ENCODE measurements at regions of chr19 and their contacts with region 1.

Region 1: DNA sequence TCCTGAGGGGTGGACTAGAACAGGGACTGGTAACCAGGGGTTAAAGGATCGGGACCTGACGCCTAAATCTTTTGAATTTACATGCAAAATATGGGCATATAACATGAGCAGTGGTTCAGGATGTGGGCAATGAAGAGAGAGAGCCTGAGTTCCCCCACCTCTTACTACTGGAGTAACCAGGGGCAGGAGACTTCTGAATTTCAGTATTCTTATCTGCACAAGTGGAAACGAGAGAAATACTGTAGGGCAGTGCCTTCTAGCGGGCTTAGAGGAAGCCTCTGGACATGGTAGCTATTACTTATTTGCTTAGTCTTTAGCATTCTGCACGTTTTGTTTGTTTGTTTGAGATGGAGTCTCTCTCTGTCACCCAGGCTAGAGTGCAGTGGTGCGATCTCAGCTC is 26.3 kb downstream of the BCAT2 start:
- DNase-seq: no peak
- H3K4me3 ChIP-seq: no peak overlapping the region
- H3K4me3 Mint-ChIP-seq: peak overlapping the region in 1 of 8 donors; percentile 17
- H3K27ac ChIP-seq: no peak overlapping the region
- H3K27ac Mint-ChIP-seq: no peak overlapping the region
- H3K4me1 ChIP-seq: no peaks in the 10 kb centered on the region
- H3K4me1 Mint-ChIP-seq: peaks cover 0 to 5% (median 4%) of the 10 kb centered on the region in 4 donors
- H3K27me3 ChIP-seq: no peaks in the 10 kb centered on the region
- H3K27me3 Mint-ChIP-seq: peaks cover 10 to 14% of the 10 kb centered on the region in 2 donors

Region 2: DNA sequence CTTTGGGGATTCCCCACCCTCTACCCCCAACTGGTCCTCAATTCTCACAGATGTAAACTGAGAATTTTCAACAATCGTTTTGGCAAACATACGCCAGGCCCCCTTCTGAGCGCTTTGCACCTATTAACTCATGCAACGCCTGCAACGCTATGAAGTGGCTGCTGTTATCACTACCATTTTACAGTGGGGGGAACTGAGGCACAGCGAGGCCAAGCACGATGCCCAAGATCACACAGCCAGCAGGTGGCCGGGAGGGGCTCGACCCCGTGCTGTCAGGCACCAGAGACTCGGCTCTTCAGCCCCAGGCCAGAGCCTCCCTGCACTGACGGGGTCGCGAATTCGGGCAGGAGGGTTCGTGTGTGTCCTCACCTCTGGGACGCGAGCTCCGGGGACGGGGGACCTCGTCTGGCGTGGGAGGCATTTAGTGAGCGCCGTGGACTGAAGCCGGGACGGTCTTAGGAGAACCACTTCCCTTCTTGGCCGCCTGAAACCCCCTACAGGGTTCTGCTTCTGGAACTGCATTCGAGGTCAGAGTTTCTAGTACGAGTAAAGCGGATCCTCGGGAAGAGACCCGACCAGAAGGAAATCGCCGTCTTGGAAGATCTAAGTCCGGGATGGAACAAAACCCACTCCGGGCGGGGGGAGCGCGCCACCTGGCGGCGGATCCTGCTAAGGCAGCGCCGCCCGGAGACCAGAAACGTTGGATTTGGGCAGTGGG is 493.6 kb before region 1 on chr19:
- CTCF ChIA-PET with region 1: no interaction called
- POLR2A ChIA-PET with region 1: no interaction called
- intact Hi-C with region 1: no loop called
- DNase-seq: peak; percentile 46 to 65 (median 48)
- H3K4me3 ChIP-seq: peak overlapping the region; percentile 29 to 58
- H3K4me3 Mint-ChIP-seq: peak overlapping the region; percentile 77 to 86 (median 81)
- H3K27ac ChIP-seq: no peak overlapping the region
- H3K27ac Mint-ChIP-seq: peak overlapping the region in 2 of 7 donors; percentile 27 to 68
- H3K4me1 ChIP-seq: peaks cover 8% of the 10 kb centered on the region
- H3K4me1 Mint-ChIP-seq: peaks cover 0 to 8% (median 3%) of the 10 kb centered on the region in 4 donors
- H3K27me3 ChIP-seq: no peaks in the 10 kb centered on the region
- H3K27me3 Mint-ChIP-seq: peaks cover 3 to 13% of the 10 kb centered on the region in 2 donors

Region 3: DNA sequence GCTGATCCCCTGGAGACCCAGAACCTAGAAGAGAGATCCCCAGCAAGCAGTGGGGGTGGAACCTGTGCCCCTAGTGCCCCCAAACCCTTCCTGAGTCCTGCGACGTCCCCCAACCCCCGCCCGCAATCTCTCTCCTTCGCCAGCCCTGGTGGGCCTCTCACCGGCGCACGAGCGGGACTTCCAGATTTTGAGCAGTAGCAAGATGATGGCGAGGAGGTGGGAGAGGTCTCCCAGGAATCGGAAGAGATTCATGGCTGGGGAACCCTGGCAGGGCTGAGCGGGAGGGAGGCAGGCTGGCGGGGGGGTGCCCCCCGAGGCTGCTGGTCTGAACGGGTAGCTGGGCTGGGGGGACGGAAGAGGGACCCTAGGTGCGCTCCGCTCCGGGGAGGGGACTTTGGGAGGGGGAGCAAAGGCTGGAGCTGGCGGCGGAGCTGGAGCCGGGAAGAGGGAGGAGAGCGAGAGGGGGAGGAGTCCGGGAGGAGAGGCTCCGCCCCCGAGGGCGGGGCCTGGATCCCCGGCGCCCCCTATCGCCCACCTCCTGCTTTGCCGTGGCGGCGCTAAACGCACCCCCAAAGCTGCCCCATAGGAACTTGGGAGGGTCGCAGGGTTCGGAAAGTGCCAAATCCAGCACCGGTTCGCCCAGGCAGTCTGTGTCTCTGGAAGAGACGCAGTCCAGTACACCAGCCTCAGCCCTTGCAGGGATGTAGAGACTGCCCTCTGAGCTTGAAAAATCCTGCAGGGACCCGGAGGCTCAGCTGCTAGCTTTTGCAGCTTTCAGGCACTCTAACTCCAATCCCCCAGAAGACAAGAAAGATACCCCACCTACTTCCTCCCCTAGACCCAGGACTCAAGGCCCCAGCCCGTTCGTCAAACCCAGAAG is 393.2 kb before region 1 on chr19 and contains the start of gene KDELR1:
- CTCF ChIA-PET with region 1: no interaction called
- POLR2A ChIA-PET with region 1: no interaction called
- intact Hi-C with region 1: no loop called
- DNase-seq: peak; percentile 59 to 79 (median 66)
- H3K4me3 ChIP-seq: peak within 1 kb of the TSS; percentile 63 to 89
- H3K4me3 Mint-ChIP-seq: peak within 1 kb of the TSS; percentile 91 to 95 (median 94)
- H3K27ac ChIP-seq: peak within 1 kb of the TSS; percentile 93
- H3K27ac Mint-ChIP-seq: peak within 1 kb of the TSS; percentile 89 to 98 (median 95)
- H3K4me1 ChIP-seq: peaks cover 41% of the 10 kb centered on the region
- H3K4me1 Mint-ChIP-seq: peaks cover 15 to 49% (median 33%) of the 10 kb centered on the region in 4 donors
- H3K27me3 ChIP-seq: peaks cover 19% of the 10 kb centered on the region
- H3K27me3 Mint-ChIP-seq: peaks cover 6 to 19% of the 10 kb centered on the region in 2 donors
- total RNA-seq, gene KDELR1: 58.8 to 63.2 TPM

Region 4: GRCh38 chr19:48746738-48747575 is 37.6 kb before region 1 on chr19 and contains the start of gene IZUMO1:
- CTCF ChIA-PET with region 1: no interaction called
- POLR2A ChIA-PET with region 1: no interaction called
- intact Hi-C with region 1: no loop called
- DNase-seq: peak; percentile 46 to 70 (median 55)
- H3K4me3 ChIP-seq: peak within 1 kb of the TSS in 1 of 2 donors; percentile 23
- H3K4me3 Mint-ChIP-seq: peak within 1 kb of the TSS in 3 of 8 donors; percentile 6 to 39 (median 35)
- H3K27ac ChIP-seq: no peak within 1 kb of the TSS
- H3K27ac Mint-ChIP-seq: peak within 1 kb of the TSS in 3 of 7 donors; percentile 1 to 60 (median 21)
- H3K4me1 ChIP-seq: peaks cover 12% of the 10 kb centered on the region
- H3K4me1 Mint-ChIP-seq: peaks cover 4 to 24% (median 12%) of the 10 kb centered on the region in 4 donors
- H3K27me3 ChIP-seq: peaks cover 5% of the 10 kb centered on the region
- H3K27me3 Mint-ChIP-seq: peaks cover 0 to 4% of the 10 kb centered on the region in 2 donors
- total RNA-seq, gene IZUMO1: not detected

Region 5: GRCh38 chr19:48830088-48830487 is 45.5 kb after region 1 on chr19:
- CTCF ChIA-PET with region 1: interaction called, 11 read pairs
- POLR2A ChIA-PET with region 1: no interaction called
- intact Hi-C with region 1: loop called (anchors 1 kb)
- DNase-seq: no peak
- H3K4me3 ChIP-seq: no peak overlapping the region
- H3K4me3 Mint-ChIP-seq: no peak overlapping the region
- H3K27ac ChIP-seq: no peak overlapping the region
- H3K27ac Mint-ChIP-seq: no peak overlapping the region
- H3K4me1 ChIP-seq: no peaks in the 10 kb centered on the region
- H3K4me1 Mint-ChIP-seq: peaks cover 0 to 5% (median 0%) of the 10 kb centered on the region in 4 donors
- H3K27me3 ChIP-seq: no peaks in the 10 kb centered on the region
- H3K27me3 Mint-ChIP-seq: peaks cover 0 to 3% of the 10 kb centered on the region in 2 donors

Region 6: GRCh38 chr19:48835734-48836088 is 51.2 kb after region 1 on chr19:
- CTCF ChIA-PET with region 1: interaction called, 140 read pairs
- POLR2A ChIA-PET with region 1: interaction called, 4 read pairs
- intact Hi-C with region 1: loop called (anchors 1 kb)
- DNase-seq: peak; percentile 87 to 91 (median 89)
- H3K4me3 ChIP-seq: peak overlapping the region in 1 of 2 donors; percentile 51
- H3K4me3 Mint-ChIP-seq: peak overlapping the region; percentile 77 to 91 (median 84)
- H3K27ac ChIP-seq: no peak overlapping the region
- H3K27ac Mint-ChIP-seq: peak overlapping the region in 6 of 7 donors; percentile 68 to 92 (median 86)
- H3K4me1 ChIP-seq: peaks cover 21% of the 10 kb centered on the region
- H3K4me1 Mint-ChIP-seq: peaks cover 15 to 21% (median 16%) of the 10 kb centered on the region in 4 donors
- H3K27me3 ChIP-seq: no peaks in the 10 kb centered on the region
- H3K27me3 Mint-ChIP-seq: peaks cover 4 to 14% of the 10 kb centered on the region in 2 donors

Measured in CD4-positive, alpha-beta memory T cell (primary cell).